ENCODE measurements at regions of chr9 and their contacts with region 1.

Region 1: GRCh38 chr9:93575796-93576257 is 557 bp upstream of the PHF2 start:
- DNase-seq: peak; percentile 36
- H3K4me3 Mint-ChIP-seq: peak overlapping the region; percentile 88
- H3K27ac Mint-ChIP-seq: peak overlapping the region; percentile 92
- H3K4me1 Mint-ChIP-seq: peaks cover 28% of the 10 kb centered on the region
- H3K27me3 Mint-ChIP-seq: no peaks in the 10 kb centered on the region

Region 2: DNA sequence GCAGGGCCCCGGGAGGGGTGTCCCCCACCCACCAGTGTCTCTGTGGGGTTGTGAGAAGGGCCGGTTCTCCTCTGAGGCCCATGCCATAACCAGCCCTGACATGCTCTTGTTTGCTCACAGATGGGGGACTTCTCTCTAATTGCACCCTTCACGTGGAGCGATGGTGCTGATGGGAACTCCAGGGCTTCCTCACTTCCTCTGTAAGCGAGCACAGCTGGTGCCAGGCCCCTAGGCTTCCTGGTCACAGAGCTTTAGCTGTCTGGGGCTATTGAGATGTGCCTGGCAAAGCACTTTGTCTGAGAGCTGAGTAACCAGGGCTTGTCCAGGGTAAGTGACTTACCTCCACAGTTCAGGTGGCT is 36.9 kb after region 1 on chr9:
- intact Hi-C with region 1: loop called (anchors 1 kb)
- DNase-seq: no peak
- H3K4me3 Mint-ChIP-seq: no peak overlapping the region
- H3K27ac Mint-ChIP-seq: peak overlapping the region; percentile 49
- H3K4me1 Mint-ChIP-seq: peaks cover 15% of the 10 kb centered on the region
- H3K27me3 Mint-ChIP-seq: no peaks in the 10 kb centered on the region

Measured in activated T-helper 1 cell treated with anti-CD3 and anti-CD28 coated beads, Interleukin-12 subunit alpha, Interleukin-12 subunit beta, Interleukin-2, Interleukin-4 antibody, amounts not matched to agents 30 ng/mL and 10 ng/mL and 1 ng/mL, durations not matched to agents 14 hours and 24 hours and 36 hours (primary cell).